AG04450 (cell line): ENCODE measurements at regions of chr2 and their contacts with region 1.

Region 1: GRCh38 chr2:46923041-46923528 is 7.5 kb upstream of the MCFD2 start:
- DNase-seq: no peak
- H3K4me3 ChIP-seq: no peak overlapping the region
- H3K27ac ChIP-seq: no peak overlapping the region
- H3K27me3 ChIP-seq: no peaks in the 10 kb centered on the region
- CTCF ChIP-seq: no peak

Region 2: DNA sequence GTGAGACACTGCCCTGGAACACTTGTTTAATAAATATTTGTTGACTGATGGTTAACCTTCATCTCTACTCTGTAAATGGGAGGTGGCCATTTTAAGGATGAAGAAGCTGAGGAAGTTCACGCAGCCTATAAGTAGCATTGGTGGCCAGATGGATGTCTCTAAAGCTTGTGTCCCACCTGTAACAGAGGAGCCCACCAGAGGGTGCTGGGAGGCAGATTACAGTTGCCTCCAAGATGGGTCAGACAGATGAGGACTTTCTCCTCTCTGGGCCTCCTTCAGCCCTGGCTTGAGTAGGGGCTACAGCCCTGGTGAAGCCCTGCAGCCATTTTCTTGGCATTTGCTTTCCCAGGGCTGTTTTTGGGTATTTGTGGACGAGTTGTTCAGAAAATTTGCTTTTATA is 37.5 kb after region 1 on chr2:
- CTCF ChIA-PET with region 1: interaction called, 3 read pairs
- POLR2A ChIA-PET with region 1: interaction called, 13 read pairs
- DNase-seq: no peak
- H3K4me3 ChIP-seq: no peak overlapping the region
- H3K27ac ChIP-seq: no peak overlapping the region
- H3K27me3 ChIP-seq: no peaks in the 10 kb centered on the region
- CTCF ChIP-seq: no peak

Region 3: GRCh38 chr2:46996300-46996843 is 73.3 kb after region 1 on chr2:
- CTCF ChIA-PET with region 1: no interaction called
- POLR2A ChIA-PET with region 1: no interaction called
- DNase-seq: no peak
- H3K4me3 ChIP-seq: no peak overlapping the region
- H3K27ac ChIP-seq: no peak overlapping the region
- H3K27me3 ChIP-seq: no peaks in the 10 kb centered on the region
- CTCF ChIP-seq: no peak